ENCODE measurements at regions of chr6 and their contacts with region 1.

Region 1: GRCh38 chr6:33638556-33638955 is 17.4 kb downstream of the ITPR3 start:
- DNase-seq: no peak
- ATAC-seq: no peak
- H3K4me3 ChIP-seq: no peak overlapping the region
- H3K4me3 Mint-ChIP-seq: no peak overlapping the region
- H3K27ac ChIP-seq: no peak overlapping the region
- H3K27ac Mint-ChIP-seq: peak overlapping the region; percentile 31 to 61
- H3K4me1 ChIP-seq: peaks cover 3 to 40% of the 10 kb centered on the region in 2 experiments
- H3K4me1 Mint-ChIP-seq: peaks cover 51 to 53% (median 53%) of the 10 kb centered on the region in 3 donors
- H3K27me3 ChIP-seq: no peaks in the 10 kb centered on the region
- H3K27me3 Mint-ChIP-seq: no peaks in the 10 kb centered on the region

Region 2: DNA sequence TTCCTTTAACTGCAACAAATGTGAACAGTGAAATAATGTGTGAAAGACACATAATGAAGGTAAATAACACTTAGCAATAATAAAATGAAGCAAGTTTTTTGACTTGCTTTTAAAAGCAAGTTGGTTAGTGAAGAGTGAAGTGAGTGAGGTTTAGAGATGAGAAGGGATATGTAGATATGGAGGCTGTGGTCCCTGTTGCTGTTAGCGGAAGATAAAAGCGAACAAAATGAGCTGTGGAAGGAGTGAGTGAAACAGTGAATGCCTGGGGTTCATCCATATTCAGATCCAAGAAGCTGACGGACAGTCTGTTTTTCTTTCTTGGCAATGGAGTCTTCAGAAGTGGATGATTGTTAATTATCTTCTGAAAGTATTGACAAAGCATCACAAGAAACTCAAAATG is 160.7 kb before region 1 on chr6:
- CTCF ChIA-PET with region 1: interaction called in 1 of 2 experiments, 10 read pairs
- POLR2A ChIA-PET with region 1: no interaction called
- DNase-seq: no peak
- ATAC-seq: no peak
- H3K4me3 ChIP-seq: no peak overlapping the region
- H3K4me3 Mint-ChIP-seq: no peak overlapping the region
- H3K27ac ChIP-seq: no peak overlapping the region
- H3K27ac Mint-ChIP-seq: no peak overlapping the region
- H3K4me1 ChIP-seq: no peaks in the 10 kb centered on the region
- H3K4me1 Mint-ChIP-seq: no peaks in the 10 kb centered on the region
- H3K27me3 ChIP-seq: peaks cover 0 to 7% of the 10 kb centered on the region in 2 experiments
- H3K27me3 Mint-ChIP-seq: peaks cover 0 to 4% of the 10 kb centered on the region in 2 donors